HEK293 (cell line): ENCODE measurements at regions of chr19 and their contacts with region 1.

Region 1: GRCh38 chr19:49421039-49421877 is 2.0 kb downstream of the PTH2 start:
- H3K4me3 ChIP-seq: peak overlapping the region; percentile 16; the same call in 1 of the 2 replicates
- H3K27ac ChIP-seq: no peak overlapping the region
- H3K4me1 ChIP-seq: peaks cover 5% of the 10 kb centered on the region
- CTCF ChIP-seq: no peak

Region 2: DNA sequence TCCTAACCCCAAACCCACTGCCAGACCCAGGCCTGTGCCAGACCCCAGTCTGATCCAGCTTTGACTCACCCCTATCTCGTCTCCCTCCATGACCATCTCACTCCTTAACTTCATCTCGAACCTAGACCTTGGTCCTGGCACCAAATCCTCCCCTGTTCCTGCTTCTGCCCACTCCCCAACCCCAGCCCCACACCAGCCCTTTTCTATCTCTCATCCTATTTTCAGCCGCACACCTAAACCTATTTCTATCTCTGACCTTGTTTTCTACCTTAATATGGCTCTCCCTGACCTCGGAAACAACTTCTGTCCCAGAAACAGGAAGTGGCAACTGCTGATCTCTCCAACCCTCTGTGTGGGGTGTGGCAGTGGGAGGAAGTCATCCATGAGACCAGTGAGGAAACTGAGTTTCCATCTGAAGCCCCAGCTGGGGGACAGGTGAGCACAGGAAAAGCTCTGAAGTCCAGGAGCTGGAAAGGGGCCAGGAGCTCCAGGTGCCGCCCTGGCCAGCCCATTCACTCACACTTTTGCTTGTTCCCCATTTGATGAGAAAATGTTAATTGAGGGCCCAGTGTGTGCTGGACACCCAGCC is 11.7 kb before region 1 on chr19:
- CTCF ChIA-PET with region 1: interaction called, 28 read pairs
- POLR2A ChIA-PET with region 1: interaction called, 3 read pairs
- H3K4me3 ChIP-seq: no peak overlapping the region
- H3K27ac ChIP-seq: no peak overlapping the region
- H3K4me1 ChIP-seq: peaks cover 2% of the 10 kb centered on the region; the same call in 1 of the 2 replicates
- CTCF ChIP-seq: no peak

Region 3: DNA sequence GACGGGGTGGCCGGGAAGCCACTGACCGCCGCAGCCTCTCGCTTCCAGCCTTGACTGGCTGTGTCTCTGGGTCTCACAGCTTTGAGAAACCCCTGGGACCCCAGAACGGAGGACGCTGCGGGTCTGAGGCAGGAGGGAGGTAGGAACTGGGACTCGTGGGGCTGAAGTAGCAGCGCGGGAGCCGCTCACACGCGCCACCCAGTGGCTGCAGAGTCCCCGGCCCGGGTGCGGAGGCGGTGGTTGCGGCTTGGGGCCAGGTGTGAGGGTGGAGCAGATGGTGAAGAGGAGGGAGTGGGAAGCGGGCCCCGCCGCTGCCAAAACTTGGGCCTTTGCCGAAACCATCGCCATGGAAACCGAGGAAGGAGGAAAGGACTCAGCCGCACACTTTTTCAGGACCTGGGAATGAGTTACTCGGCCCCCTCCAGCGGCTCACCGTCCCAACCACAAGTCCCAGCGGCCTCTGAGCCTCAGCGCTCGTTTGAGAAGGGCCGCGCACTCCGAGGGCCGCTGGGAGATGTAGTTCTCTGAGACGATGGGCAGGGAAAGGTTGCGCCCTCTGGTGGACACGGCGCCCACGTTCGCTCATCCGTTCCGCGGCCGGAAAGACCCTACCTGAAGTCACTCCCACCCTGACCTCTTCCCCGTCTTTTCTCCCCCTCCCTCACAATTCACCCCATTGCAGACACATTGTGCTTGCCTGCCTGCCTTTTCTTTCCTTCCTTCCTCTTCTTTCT is 22.3 kb after region 1 on chr19:
- CTCF ChIA-PET with region 1: interaction called, 11 read pairs
- POLR2A ChIA-PET with region 1: no interaction called
- H3K4me3 ChIP-seq: peak overlapping the region; percentile 60
- H3K27ac ChIP-seq: peak overlapping the region; percentile 50
- H3K4me1 ChIP-seq: peaks cover 7% of the 10 kb centered on the region
- CTCF ChIP-seq: peak; percentile 99

Region 4: DNA sequence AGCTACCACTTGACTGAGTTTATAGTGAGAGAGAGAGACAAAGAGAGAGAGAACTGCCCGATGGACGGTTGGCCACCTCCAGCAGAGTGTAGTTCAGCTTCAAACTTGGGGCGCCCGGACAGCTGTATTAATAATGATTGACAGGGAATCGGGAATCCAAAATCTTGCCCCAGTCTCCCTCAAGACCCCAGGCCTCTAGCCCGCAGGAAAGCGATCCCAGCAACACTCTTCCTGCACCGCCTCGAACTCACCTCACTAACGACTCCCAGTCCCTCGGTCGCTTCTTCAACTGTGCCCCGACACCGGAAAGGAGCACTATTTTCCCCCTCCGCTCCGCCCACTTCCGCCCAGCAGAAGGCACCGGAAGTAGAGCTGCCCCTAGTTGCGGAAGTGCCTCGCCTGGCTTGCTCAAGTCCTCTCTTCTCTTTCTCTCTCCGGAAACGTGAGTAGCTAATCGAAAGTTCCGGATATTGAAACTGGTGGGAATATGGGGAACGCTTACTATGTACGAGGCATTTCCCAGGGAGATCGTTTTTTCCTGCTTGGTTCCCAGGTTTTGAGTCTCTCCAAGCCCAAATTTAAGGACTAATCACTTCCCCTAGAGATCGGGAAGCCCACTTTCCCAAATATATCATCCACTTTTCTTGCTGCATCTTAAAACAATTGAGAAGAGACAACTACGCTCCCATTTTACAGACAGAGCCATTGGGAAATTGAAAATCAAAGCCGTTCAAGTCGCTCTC is 159.2 kb after region 1 on chr19 and contains the start of gene NOSIP:
- CTCF ChIA-PET with region 1: no interaction called
- POLR2A ChIA-PET with region 1: no interaction called
- H3K4me3 ChIP-seq: peak within 1 kb of the TSS; percentile 67
- H3K27ac ChIP-seq: peak within 1 kb of the TSS; percentile 58
- H3K4me1 ChIP-seq: peaks cover 9% of the 10 kb centered on the region
- CTCF ChIP-seq: no peak